ENCODE measurements at regions of chr4 and their contacts with region 1.

Region 1: DNA sequence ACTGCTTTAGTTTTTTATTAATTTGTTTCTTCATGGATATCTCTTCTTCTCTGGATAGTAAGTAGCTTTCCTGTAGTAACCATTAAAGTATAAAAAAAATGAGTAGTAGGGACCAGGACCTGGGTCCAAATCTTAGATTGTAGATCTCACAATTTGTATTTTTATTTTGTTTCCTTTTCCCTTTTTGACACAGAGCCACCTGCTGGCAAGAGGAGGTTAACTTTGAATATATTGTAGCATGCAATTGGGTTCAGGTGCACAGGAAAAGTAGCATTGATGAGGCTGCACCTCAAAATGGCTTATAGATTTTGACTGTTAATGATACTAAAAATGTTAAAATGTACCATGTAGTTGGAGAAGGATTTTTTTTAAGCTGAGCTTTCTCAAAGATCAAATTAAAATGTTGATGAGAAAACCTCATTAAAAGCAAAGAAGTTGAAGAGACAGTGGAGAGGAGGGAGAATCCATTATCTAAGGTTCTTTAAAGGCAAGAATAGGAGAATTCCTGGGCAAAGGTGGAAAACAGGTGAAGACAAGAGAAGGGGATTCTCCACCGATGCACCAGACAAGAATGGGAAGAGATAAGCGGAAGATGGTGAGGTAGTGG is 48.3 kb upstream of the HPGDS start:
- DNase-seq: peak in 1 of 2 donors; percentile 36
- ATAC-seq: no peak
- H3K4me3 ChIP-seq: no peak overlapping the region
- H3K4me3 Mint-ChIP-seq: no peak overlapping the region
- H3K27ac ChIP-seq: no peak overlapping the region
- H3K27ac Mint-ChIP-seq: no peak overlapping the region
- H3K4me1 ChIP-seq: no peaks in the 10 kb centered on the region
- H3K4me1 Mint-ChIP-seq: no peaks in the 10 kb centered on the region
- H3K27me3 ChIP-seq: no peaks in the 10 kb centered on the region
- H3K27me3 Mint-ChIP-seq: peaks cover 0 to 13% of the 10 kb centered on the region in 2 donors
- CTCF ChIP-seq: no peak

Region 2: DNA sequence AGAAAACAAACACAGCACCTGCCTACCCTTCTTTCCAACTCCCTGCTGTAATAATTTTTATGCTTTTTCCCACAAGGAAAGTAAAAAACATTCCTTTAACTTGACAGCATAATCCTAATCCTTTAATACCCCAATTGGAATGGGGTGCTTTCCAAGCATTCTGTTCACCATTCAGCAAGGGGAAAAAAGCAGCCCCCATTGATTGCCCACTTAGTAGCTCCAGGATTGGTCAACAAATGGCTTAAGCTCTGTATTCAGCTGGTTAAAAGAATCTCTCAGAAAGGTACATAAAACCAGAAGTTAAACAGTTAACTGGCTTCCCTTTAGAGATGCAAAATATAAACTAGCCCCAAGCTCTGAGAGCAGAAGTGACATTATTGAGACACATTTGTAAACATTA is 757.2 kb before region 1 on chr4:
- intact Hi-C with region 1: no loop called
- DNase-seq: no peak
- ATAC-seq: no peak
- H3K4me3 ChIP-seq: no peak overlapping the region
- H3K4me3 Mint-ChIP-seq: no peak overlapping the region
- H3K27ac ChIP-seq: no peak overlapping the region
- H3K27ac Mint-ChIP-seq: no peak overlapping the region
- H3K4me1 ChIP-seq: no peaks in the 10 kb centered on the region
- H3K4me1 Mint-ChIP-seq: no peaks in the 10 kb centered on the region
- H3K27me3 ChIP-seq: no peaks in the 10 kb centered on the region
- H3K27me3 Mint-ChIP-seq: no peaks in the 10 kb centered on the region
- CTCF ChIP-seq: no peak

Region 3: DNA sequence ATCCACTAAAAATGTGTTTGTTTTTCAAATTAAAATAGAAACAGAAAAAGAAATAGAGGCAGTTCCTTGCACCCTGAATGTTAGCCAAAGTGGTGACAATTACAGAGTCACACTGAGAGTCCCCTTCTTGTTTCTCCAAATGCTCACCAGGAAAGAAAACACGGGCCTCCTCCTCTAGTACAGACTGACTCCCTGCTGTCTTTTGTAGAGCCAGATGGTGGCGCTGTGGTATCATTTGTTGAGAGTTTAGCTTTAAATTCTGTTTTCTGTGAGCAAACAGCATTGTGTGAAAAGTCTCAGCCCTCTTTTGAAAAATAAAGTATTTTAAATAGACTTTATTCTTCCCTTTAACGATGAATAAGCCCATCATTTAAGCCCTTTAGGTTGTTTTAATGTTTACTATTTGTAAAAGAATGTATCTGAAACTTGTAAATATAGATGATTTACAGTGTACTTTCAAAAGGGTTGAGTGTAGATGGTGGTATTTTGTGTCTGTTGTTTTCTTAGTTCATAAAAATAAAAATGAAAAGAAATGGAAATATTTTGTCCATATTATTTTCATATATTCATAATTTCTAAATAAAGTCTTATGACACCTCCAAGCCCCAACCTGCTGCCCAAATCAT is 599.2 kb before region 1 on chr4:
- intact Hi-C with region 1: loop called (anchors 10 kb)
- DNase-seq: peak in 1 of 2 donors; percentile 11
- ATAC-seq: no peak
- H3K4me3 ChIP-seq: no peak overlapping the region
- H3K4me3 Mint-ChIP-seq: no peak overlapping the region
- H3K27ac ChIP-seq: no peak overlapping the region
- H3K27ac Mint-ChIP-seq: no peak overlapping the region
- H3K4me1 ChIP-seq: no peaks in the 10 kb centered on the region
- H3K4me1 Mint-ChIP-seq: no peaks in the 10 kb centered on the region
- H3K27me3 ChIP-seq: no peaks in the 10 kb centered on the region
- H3K27me3 Mint-ChIP-seq: no peaks in the 10 kb centered on the region
- CTCF ChIP-seq: peak; percentile 26

Region 4: GRCh38 chr4:94068753-94069719 is 321.9 kb before region 1 on chr4:
- intact Hi-C with region 1: no loop called
- DNase-seq: no peak
- ATAC-seq: no peak
- H3K4me3 ChIP-seq: no peak overlapping the region
- H3K4me3 Mint-ChIP-seq: no peak overlapping the region
- H3K27ac ChIP-seq: no peak overlapping the region
- H3K27ac Mint-ChIP-seq: no peak overlapping the region
- H3K4me1 ChIP-seq: no peaks in the 10 kb centered on the region
- H3K4me1 Mint-ChIP-seq: no peaks in the 10 kb centered on the region
- H3K27me3 ChIP-seq: no peaks in the 10 kb centered on the region
- H3K27me3 Mint-ChIP-seq: no peaks in the 10 kb centered on the region
- CTCF ChIP-seq: no peak